ENCODE measurements at regions of chr2 and their contacts with region 1.

Region 1: DNA sequence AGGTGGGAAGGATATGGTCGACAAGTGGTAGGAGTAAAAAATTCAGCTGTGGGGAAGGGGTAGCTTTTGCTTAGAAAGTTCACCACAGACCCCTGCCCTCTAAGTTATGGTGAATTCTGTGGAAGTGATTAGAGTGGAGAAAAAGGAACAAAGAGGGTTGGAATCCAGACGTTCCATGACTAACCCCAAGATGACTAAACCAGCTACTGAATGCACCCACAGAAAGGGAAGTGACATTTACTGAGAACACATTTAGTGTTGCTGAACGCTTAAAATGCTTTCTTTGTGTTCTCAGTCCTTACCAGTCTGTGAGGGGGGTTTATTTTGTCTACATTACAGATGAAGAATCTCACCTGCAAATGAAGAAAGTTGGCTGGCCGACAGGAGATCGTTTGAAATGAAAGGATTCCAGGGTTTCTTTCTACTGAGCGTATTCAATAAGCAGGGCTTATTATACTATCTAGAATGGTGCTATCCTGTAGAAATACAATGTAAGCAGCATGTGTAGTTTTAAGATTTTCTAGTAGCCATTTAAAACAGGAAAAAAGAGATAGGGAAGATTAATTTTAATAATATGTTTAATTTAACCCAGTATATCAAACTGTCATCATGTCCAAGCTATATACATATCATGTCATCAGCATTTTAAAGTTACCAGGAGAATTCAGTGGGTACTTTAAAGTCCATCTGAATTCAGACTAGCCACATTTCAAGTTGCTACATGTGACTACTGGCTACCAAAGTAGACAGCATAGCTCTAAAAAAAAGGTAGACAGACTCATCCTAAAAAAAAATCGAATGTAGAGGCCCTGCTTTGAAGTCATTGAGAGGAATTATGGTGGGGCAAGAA is 60.1 kb downstream of the LIMS1 start:
- DNase-seq: peak; percentile 80
- H3K4me3 ChIP-seq: no peak overlapping the region
- CTCF ChIP-seq: no peak

Region 2: DNA sequence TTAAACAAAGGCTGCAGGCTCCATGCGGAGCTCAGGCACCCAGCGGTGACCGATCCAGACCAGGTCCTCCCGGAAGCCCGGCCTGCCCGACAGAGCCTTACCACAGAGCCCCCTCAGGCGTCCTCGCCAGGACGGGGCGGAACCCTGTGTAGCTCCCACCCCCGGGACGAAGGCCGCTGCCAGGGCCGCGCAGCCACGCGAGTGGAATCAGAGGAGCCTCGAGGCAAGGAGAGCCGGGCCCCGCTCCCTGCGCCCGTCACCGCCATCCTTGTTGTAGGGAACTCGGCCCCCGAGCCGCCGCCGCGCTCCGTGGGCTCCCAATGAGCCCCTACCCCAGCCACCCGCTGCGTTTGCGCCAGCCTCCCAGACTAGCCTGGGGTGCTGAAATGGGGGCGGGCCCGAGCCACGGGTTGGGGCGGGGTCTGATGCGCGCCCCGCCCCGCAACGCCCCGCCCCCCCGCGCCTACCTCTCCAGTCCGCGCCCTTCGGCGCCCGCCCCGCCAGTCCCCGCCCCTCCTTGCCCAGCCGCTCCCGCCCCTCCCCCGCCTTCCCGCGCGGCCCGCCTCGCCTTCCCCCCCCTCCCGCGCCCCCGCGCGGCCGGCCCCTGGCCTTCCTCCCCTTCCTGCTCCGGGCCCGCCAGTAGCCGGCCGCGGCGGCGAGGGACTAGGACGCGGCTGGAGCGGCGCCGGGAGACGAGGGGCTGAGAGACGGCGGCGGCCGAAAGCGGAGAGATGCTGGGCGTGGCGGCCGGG is 60.3 kb before region 1 on chr2 and contains the start of gene LIMS1:
- CTCF ChIA-PET with region 1: no interaction called
- POLR2A ChIA-PET with region 1: interaction called, 10 read pairs
- DNase-seq: no peak
- H3K4me3 ChIP-seq: peak within 1 kb of the TSS; percentile 76
- CTCF ChIP-seq: peak; percentile 5

Region 3: DNA sequence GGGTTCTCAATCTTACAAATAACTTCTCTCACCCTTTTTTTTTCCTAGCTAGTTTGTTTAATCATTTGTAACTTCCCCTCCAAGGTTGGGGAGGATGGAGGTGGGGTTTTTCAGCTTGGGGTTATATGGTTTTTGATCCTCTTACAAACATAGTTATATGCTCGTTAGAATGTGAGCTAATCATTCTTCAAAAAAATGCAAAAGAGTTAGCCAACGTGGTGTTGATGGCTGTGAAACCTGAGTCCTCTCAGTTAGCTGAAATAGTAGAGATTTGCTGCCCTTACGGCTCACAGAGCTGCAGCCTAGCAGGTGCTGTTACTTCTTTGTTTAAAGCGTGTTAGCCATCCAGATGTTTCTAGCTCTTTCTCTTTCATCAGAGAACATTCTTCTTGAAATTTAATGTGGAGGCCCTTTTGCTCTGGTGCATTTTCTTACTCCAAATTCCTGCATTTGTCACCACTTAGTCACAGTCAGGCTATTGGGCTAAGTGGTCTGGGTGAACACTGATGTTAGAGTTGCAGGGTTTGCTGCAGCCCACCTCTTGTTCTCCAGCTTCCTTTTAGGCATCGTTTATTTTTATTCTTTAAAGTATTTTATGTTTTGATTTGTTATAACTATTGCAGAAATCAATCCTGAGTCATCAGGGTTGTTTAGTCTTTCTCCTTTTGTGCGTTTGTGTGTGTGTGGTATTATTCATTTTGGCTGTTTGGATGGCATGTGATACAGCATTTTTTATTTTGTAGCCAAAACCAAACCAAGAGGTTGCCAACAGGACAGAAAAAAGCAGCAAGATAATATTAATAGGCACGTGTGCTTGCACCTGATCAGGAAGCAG is 19.0 kb before region 1 on chr2:
- CTCF ChIA-PET with region 1: interaction called, 4 read pairs
- POLR2A ChIA-PET with region 1: interaction called, 11 read pairs
- DNase-seq: no peak
- H3K4me3 ChIP-seq: no peak overlapping the region
- CTCF ChIP-seq: no peak

Measured in AG04449 (cell line).